Heart left ventricle (tissue), 16 donors: ENCODE measurements at regions of chr7 and their contacts with region 1.

Region 1: DNA sequence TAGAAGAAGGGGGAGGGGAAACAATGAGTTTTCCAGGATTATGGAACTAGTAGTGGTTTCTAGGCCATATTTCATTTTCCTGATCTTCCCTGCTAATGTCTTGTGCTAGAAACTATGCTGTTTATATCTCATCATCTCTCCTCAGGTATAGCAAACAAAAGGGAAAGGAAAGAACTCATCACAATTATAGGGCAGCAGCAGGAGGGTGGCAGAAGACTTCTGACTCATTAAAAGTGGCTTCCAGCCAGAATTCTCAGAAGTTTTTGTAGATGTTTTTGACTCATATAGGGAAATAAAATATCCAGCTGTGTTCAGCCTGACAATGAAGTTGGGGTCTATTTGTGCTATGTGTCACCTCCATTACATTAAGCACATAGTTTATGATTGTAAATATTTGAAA is 6.5 kb downstream of the AHR start:
- DNase-seq: no peak
- ATAC-seq: peak in 3 of 4 donors; percentile 29 to 47 (median 43)
- H3K4me3 ChIP-seq: peak overlapping the region in 4 of 12 donors; percentile 3 to 97 (median 12)
- H3K27ac ChIP-seq: peak overlapping the region in 9 of 12 donors; percentile 19 to 98 (median 51)
- H3K4me1 ChIP-seq: peaks cover 0 to 91% (median 63%) of the 10 kb centered on the region in 12 donors
- H3K27me3 ChIP-seq: no peaks in the 10 kb centered on the region
- CTCF ChIP-seq: no peak
- POLR2A ChIP-seq: no peak

Region 2: DNA sequence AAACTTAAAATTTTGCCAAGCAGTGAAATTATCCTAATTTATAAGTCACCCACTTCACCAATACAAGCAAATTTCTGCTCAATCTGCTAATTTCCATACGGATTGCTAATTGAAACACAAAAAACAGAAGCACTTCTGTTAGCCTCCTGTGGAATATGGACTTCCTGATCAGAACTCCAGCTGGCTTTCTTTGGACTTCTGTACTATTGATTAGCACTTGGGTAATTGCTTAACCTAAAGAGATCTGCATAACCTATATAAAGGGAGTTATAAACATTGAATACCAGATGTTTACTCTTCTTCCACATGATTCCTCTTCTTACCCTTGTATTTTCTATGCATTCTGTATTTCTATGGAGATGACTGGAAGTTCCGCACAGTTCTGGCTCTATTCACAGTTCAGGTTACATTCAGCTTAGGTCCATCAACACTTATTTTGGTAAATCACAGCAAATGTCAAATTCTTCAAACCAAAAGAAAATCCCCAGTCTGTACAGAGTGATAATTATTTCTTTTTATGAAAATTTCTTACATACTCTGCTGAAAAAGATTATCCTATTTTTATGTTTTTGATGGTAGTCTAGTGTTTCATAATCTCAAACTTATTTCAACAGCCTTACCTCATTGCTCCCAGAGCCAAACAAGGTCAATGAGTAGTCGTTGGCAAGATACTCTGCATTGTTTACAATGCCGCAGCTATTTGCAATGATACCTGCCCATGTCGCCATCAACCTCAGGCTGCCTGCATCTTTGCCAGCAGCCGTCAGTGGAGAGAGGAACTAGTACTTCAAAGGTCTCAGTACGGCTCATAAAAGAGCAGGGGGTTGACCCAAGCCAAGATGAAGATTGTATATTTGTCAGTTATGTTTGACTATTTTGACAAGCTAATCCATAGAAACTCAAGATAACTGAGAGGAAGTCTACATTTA is 219.2 kb after region 1 on chr7:
- intact Hi-C with region 1: loop called in 3 of 10 experiments (anchors 5 to 10 kb)
- DNase-seq: no peak
- ATAC-seq: peak in 3 of 4 donors; percentile 41 to 66 (median 59)
- H3K4me3 ChIP-seq: no peak overlapping the region
- H3K27ac ChIP-seq: peak overlapping the region in 5 of 12 donors; percentile 2 to 35 (median 8)
- H3K4me1 ChIP-seq: peaks cover 0 to 49% (median 9%) of the 10 kb centered on the region in 12 donors
- H3K27me3 ChIP-seq: no peaks in the 10 kb centered on the region
- CTCF ChIP-seq: no peak
- POLR2A ChIP-seq: no peak